ENCODE measurements at regions of chr7 and their contacts with region 1.

Region 1: GRCh38 chr7:10889266-10889898 is 84.3 kb upstream of the PHF14 start:
- DNase-seq: peak in 1 of 2 experiments; percentile 53
- H3K4me3 ChIP-seq: no peak overlapping the region
- H3K4me3 Mint-ChIP-seq: no peak overlapping the region
- H3K27ac Mint-ChIP-seq: no peak overlapping the region
- H3K4me1 ChIP-seq: no peaks in the 10 kb centered on the region
- H3K4me1 Mint-ChIP-seq: peaks cover 9% of the 10 kb centered on the region
- H3K27me3 ChIP-seq: no peaks in the 10 kb centered on the region
- H3K27me3 Mint-ChIP-seq: peaks cover 10% of the 10 kb centered on the region
- CTCF ChIP-seq: peak; percentile 64 to 86

Region 2: DNA sequence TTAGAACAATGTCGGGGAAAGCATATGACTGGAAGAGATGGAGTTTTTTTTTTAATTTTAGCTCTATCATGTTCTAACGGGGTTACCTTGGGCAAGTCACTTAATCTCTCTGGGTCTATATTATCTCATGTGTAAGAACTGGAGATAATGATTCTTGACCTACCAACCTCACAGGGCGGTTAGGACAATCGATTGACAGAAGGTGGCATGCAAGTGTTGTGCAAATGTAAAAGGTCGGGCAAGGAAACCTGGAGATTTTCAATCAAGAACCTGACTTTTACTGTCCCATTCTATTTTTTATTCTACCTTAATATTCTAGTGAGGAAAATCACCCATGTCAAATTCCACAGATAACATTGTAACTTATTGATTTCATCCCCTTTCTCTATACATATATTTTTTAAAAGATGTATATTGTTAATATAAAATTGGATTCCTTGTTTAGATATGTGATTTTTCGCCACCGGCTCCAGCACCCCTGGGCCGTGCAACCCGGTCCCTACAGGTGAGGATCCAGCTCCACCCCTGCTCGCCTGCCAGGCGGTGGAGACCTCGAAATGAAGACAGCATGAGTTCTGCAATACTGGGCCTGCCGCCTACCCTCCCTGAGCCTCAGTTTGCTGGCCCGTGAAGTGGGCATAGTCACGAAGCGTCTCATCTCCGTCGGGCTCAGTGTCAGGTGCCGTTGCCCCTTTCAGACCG is 413.3 kb before region 1 on chr7:
- CTCF ChIA-PET with region 1: no interaction called
- POLR2A ChIA-PET with region 1: no interaction called
- intact Hi-C with region 1: loop called (anchors 1 kb)
- DNase-seq: no peak
- H3K4me3 ChIP-seq: no peak overlapping the region
- H3K4me3 Mint-ChIP-seq: no peak overlapping the region
- H3K27ac Mint-ChIP-seq: no peak overlapping the region
- H3K4me1 ChIP-seq: no peaks in the 10 kb centered on the region
- H3K4me1 Mint-ChIP-seq: no peaks in the 10 kb centered on the region
- H3K27me3 ChIP-seq: no peaks in the 10 kb centered on the region
- H3K27me3 Mint-ChIP-seq: peaks cover 6% of the 10 kb centered on the region
- CTCF ChIP-seq: no peak

Region 3: DNA sequence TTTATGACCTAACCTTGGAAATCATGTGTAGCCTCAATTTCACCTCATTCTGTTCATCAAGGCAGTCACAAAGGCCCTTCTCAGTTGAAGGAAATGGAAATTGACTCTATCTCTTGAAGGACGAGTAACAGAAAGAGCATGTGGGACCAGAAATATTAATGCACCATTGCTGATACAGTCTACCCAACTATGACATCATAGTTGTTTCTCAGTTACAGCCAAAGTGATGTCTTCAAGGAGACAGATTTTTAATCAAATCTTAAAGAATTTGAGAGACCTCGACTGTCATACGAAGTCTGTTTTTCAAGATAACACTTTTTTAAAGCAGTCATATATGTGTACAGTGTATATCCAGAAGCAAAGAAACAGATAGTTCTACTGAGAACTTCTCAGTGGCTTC is 251.4 kb before region 1 on chr7:
- CTCF ChIA-PET with region 1: no interaction called
- POLR2A ChIA-PET with region 1: no interaction called
- intact Hi-C with region 1: loop called (anchors 1 kb)
- DNase-seq: no peak
- H3K4me3 ChIP-seq: no peak overlapping the region
- H3K4me3 Mint-ChIP-seq: no peak overlapping the region
- H3K27ac Mint-ChIP-seq: no peak overlapping the region
- H3K4me1 ChIP-seq: no peaks in the 10 kb centered on the region
- H3K4me1 Mint-ChIP-seq: no peaks in the 10 kb centered on the region
- H3K27me3 ChIP-seq: no peaks in the 10 kb centered on the region
- H3K27me3 Mint-ChIP-seq: no peaks in the 10 kb centered on the region
- CTCF ChIP-seq: no peak

Region 4: DNA sequence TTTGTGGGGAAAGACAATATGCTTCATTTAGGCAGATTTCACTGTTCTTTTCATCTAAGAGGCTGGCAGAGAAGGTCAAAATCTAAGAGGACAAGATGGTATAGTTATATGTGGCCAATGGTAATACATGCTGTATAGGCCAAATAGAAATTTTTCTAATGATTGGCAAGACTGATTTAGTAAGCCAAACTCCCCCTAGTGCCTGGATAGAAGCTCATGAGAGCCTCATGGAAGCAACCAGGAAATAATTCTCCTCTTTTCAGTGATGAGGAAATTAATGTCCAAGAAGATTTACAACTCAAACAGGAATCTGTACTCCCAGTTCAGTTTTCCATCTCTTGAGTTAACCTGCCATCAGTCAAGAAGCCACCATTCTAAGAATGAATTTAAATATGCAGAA is 169.3 kb before region 1 on chr7:
- CTCF ChIA-PET with region 1: no interaction called
- POLR2A ChIA-PET with region 1: no interaction called
- intact Hi-C with region 1: loop called (anchors 10 kb)
- DNase-seq: no peak
- H3K4me3 ChIP-seq: no peak overlapping the region
- H3K4me3 Mint-ChIP-seq: no peak overlapping the region
- H3K27ac Mint-ChIP-seq: no peak overlapping the region
- H3K4me1 ChIP-seq: no peaks in the 10 kb centered on the region
- H3K4me1 Mint-ChIP-seq: no peaks in the 10 kb centered on the region
- H3K27me3 ChIP-seq: no peaks in the 10 kb centered on the region; the same call in 1 of the 2 replicates
- H3K27me3 Mint-ChIP-seq: peaks cover 3% of the 10 kb centered on the region
- CTCF ChIP-seq: peak in 1 of 2 experiments; percentile 25

Region 5: GRCh38 chr7:10939911-10940703 is 50.7 kb after region 1 on chr7:
- CTCF ChIA-PET with region 1: no interaction called
- POLR2A ChIA-PET with region 1: no interaction called
- intact Hi-C with region 1: loop called (anchors 2 kb)
- DNase-seq: peak; percentile 93 to 96
- H3K4me3 ChIP-seq: peak overlapping the region; percentile 51
- H3K4me3 Mint-ChIP-seq: no peak overlapping the region
- H3K27ac Mint-ChIP-seq: no peak overlapping the region
- H3K4me1 ChIP-seq: peaks cover 3% of the 10 kb centered on the region; the same call in 1 of the 2 replicates
- H3K4me1 Mint-ChIP-seq: no peaks in the 10 kb centered on the region
- H3K27me3 ChIP-seq: no peaks in the 10 kb centered on the region
- H3K27me3 Mint-ChIP-seq: no peaks in the 10 kb centered on the region
- CTCF ChIP-seq: no peak

Region 6: GRCh38 chr7:11130012-11130411 is 240.6 kb after region 1 on chr7:
- CTCF ChIA-PET with region 1: no interaction called
- POLR2A ChIA-PET with region 1: no interaction called
- intact Hi-C with region 1: no loop called
- DNase-seq: no peak
- H3K4me3 ChIP-seq: no peak overlapping the region
- H3K4me3 Mint-ChIP-seq: no peak overlapping the region
- H3K27ac Mint-ChIP-seq: no peak overlapping the region
- H3K4me1 ChIP-seq: no peaks in the 10 kb centered on the region
- H3K4me1 Mint-ChIP-seq: no peaks in the 10 kb centered on the region
- H3K27me3 ChIP-seq: no peaks in the 10 kb centered on the region
- H3K27me3 Mint-ChIP-seq: no peaks in the 10 kb centered on the region
- CTCF ChIP-seq: no peak

Region 7: DNA sequence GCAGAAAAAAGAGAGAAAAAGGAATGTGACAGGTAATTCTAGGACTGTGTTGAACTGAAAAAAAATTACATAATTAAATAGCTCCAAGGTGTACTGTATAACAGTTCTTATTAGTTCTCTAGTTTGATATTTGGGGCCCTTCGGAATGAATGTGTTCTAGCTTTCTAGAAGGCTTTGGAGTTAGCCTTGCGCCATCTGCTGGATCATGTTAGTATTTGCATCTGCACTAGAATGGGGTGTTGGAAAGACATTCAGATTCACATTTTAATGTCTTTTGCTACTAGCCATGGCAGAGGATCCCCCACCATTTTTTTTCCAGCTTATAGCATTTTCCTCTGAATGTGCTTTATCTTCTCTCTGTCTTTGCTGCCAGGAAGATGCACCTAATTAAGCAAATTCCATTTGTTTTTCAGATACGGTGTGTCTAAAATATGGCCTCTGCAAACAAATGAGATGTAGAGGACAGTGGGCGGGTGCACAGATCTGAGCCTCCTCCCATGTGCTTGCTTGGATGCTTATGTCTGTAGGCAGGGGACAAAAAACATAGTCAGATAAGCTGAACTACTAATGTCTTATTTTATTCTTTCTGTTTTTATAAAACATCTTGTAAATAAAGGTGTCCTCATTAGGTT is 322.8 kb after region 1 on chr7:
- CTCF ChIA-PET with region 1: no interaction called
- POLR2A ChIA-PET with region 1: no interaction called
- intact Hi-C with region 1: loop called (anchors 2 kb)
- DNase-seq: peak; percentile 56 to 59
- H3K4me3 ChIP-seq: no peak overlapping the region
- H3K4me3 Mint-ChIP-seq: no peak overlapping the region
- H3K27ac Mint-ChIP-seq: no peak overlapping the region
- H3K4me1 ChIP-seq: 0 out of 2 replicates have a peak, but pooled peaks cover 7% of the 10 kb centered on the region
- H3K4me1 Mint-ChIP-seq: no peaks in the 10 kb centered on the region
- H3K27me3 ChIP-seq: no peaks in the 10 kb centered on the region
- H3K27me3 Mint-ChIP-seq: no peaks in the 10 kb centered on the region
- CTCF ChIP-seq: peak; percentile 71 to 82